AG04450 (cell line): ENCODE measurements at regions of chr12 and their contacts with region 1.

Region 1: DNA sequence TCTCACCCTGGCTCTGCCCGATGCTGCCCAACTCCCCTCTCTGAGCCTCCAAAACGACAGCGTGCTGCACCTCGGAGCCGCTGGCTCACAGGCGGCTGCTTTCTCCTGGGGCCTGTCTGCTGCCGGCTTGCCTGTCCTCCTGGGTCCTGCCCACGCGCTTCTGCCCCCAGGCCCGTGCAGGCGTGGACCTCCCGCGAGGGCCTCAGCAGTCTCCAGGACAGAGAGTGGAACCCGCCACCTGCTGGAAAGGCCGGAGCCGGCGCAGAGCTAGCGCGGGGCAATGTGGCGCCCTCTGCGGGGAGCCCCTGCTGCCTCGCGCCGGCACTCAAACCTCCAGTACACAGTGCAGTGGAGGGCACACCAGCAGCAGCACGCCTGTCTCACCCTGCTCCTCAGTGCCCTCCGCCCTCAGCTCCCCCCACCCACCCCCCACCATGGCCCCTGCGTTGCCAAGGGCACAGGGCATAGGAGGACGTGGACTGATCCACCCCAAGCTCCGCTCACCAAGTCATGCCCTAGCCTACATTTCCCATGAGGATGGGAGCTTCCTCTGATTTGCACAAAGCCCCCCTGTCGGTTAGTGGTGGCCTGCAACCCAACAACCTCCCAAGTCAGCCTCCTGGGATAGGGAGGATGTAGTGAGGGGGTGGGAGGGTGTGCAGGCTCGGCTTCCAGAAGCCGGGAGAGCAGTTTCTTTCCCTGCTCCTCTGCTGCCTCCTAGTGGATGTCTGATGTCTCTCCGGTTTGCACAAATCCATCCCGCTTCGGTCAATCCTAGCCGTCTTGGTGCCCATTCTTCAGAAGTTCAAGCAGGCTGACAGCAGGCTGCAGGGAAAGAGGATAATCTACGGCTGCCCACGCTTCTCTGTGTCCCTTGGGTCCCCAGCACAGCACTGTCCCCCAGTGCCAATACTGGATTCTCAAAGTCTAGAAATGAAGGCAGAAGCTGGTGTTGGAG is 25.2 kb downstream of the KRT8 start:
- DNase-seq: no peak
- H3K4me3 ChIP-seq: peak overlapping the region; percentile 35
- H3K27ac ChIP-seq: no peak overlapping the region
- H3K27me3 ChIP-seq: no peaks in the 10 kb centered on the region
- CTCF ChIP-seq: peak; percentile 87

Region 2: DNA sequence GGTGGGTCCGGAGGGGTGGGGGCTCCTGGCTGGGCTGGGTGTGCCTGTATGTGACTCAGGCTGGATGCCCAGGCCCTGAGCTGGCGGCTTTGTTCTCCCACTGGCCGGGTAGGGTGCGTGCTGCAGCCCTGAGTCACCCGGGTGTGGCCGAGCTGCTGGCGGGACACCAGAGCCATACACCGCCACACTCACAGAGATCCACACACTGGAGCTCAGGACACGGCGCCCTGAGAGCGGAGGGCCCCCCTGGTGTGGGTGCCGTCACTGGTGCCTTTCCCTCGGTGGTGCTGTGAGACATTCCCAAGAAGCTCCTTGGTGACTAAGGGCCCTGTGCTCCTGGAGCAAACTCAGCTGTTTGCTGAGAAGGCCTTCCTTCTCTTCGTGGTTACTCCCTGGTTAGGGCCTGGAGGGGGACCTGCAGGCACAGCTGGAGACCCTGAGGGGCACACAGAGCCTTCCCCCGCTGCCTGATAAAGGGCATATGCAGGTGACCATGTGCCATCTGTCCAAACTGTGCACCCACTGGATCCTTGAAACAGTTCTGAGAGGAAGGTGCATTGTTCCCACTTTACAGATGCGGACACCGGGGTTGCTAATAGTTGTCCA is 732.2 kb before region 1 on chr12:
- CTCF ChIA-PET with region 1: interaction called, 29 read pairs
- POLR2A ChIA-PET with region 1: no interaction called
- DNase-seq: peak; percentile 96
- H3K4me3 ChIP-seq: no peak overlapping the region
- H3K27ac ChIP-seq: peak overlapping the region; percentile 98
- H3K27me3 ChIP-seq: no peaks in the 10 kb centered on the region
- CTCF ChIP-seq: no peak

Region 3: DNA sequence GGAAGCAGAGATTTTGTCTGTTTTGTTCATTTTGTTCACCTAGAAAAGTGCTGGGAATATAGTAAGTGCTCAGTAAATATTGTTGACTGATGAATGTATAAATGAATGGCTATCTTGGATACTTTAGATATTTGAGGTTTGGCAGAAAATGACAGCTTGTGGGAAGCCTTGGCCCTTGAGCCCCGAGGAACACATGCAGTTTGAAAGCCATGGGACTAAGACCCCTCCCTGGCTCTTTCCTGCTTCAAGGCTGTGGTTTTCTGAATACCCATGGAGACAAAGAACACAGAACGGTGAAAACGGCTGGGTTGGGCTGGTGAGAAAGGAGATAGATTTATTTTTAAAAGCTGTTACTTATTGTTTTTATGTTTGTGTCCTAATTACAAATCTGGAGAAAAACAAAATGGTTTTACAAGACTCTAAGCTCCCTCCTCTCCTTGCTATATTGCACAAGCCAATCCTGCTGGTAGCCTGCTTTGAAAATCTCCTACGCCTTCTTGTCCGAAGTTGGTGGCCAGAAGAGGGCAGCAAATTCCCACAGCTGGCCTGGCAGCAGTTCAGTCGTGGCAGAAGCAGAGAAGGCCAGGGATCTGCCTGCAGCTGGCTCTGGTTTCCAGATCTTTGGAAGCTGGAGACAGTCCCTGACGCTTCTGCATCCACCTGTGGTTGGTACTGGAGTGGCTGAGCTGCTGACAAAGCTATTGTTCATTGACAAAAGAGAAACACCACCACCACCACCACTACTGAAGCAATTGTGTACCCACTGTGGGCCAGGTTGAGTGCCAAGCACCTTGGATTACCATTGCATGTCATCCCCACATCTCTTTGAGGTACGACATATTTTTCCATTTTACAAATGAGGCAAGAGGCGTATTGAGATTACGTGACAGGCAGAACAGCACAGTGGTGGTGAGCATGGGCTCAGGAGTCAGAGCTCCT is 507.2 kb before region 1 on chr12:
- CTCF ChIA-PET with region 1: interaction called, 134 read pairs
- POLR2A ChIA-PET with region 1: no interaction called
- DNase-seq: peak; percentile 72
- H3K4me3 ChIP-seq: no peak overlapping the region
- H3K27ac ChIP-seq: no peak overlapping the region
- H3K27me3 ChIP-seq: peaks cover 35% of the 10 kb centered on the region
- CTCF ChIP-seq: peak; percentile 89

Region 4: DNA sequence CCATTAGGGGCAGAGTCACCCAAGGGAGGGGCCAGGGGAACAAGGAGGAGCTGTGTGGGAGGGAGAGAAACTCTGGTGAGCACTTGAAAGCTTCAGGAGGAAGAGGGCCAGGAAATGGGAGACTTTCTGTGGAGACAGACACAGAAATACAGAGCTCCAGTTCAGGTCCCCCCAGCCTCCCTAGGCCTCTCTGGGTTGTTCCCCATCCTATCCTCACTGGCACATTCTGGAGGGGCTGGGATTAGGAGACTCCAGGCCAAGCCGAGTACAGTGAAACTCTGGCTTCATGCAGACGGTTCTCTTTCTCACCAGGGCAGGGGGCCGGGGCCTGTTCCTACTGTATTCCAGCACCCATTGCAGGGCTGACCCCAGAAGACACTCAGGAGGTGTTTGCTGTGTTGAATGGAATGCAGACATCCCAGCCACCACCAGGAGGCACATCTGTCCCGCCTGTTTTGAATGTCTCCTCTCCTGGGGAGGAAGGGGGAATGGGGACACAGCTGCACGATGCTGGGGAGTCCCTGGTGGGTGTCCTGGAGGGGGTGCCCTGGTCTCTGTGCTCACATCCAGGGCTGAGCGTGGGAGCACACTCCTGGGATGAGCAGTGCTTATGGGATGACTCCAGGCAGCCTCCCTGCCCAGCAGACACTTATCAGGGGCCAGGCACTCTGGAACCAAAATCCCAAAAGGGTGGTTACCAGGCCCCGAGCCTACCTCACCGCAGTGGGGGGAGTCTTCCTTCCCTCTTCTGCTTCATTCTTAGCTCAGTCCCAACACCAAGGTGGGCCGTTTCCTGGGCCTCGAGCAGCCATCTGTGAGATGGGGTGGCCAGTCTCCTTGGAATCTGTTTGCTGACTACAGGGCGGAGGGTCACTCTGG is 488.7 kb before region 1 on chr12:
- CTCF ChIA-PET with region 1: interaction called, 13 read pairs
- POLR2A ChIA-PET with region 1: no interaction called
- DNase-seq: no peak
- H3K4me3 ChIP-seq: no peak overlapping the region
- H3K27ac ChIP-seq: no peak overlapping the region
- H3K27me3 ChIP-seq: peaks cover 36% of the 10 kb centered on the region
- CTCF ChIP-seq: peak; percentile 63

Region 5: GRCh38 chr12:52691076-52691840 is 188.4 kb before region 1 on chr12:
- CTCF ChIA-PET with region 1: no interaction called
- POLR2A ChIA-PET with region 1: no interaction called
- DNase-seq: no peak
- H3K4me3 ChIP-seq: no peak overlapping the region
- H3K27ac ChIP-seq: no peak overlapping the region
- H3K27me3 ChIP-seq: peaks cover 39% of the 10 kb centered on the region
- CTCF ChIP-seq: no peak

Region 6: GRCh38 chr12:52807544-52808470 is 71.9 kb before region 1 on chr12:
- CTCF ChIA-PET with region 1: no interaction called
- POLR2A ChIA-PET with region 1: no interaction called
- DNase-seq: no peak
- H3K4me3 ChIP-seq: no peak overlapping the region
- H3K27ac ChIP-seq: no peak overlapping the region
- H3K27me3 ChIP-seq: peaks cover 12% of the 10 kb centered on the region
- CTCF ChIP-seq: no peak

Region 7: GRCh38 chr12:52865090-52865944 is 14.4 kb before region 1 on chr12:
- CTCF ChIA-PET with region 1: interaction called, 27 read pairs
- POLR2A ChIA-PET with region 1: no interaction called
- DNase-seq: peak; percentile 47
- H3K4me3 ChIP-seq: no peak overlapping the region
- H3K27ac ChIP-seq: no peak overlapping the region
- H3K27me3 ChIP-seq: peaks cover 3% of the 10 kb centered on the region
- CTCF ChIP-seq: peak; percentile 89

Region 8: DNA sequence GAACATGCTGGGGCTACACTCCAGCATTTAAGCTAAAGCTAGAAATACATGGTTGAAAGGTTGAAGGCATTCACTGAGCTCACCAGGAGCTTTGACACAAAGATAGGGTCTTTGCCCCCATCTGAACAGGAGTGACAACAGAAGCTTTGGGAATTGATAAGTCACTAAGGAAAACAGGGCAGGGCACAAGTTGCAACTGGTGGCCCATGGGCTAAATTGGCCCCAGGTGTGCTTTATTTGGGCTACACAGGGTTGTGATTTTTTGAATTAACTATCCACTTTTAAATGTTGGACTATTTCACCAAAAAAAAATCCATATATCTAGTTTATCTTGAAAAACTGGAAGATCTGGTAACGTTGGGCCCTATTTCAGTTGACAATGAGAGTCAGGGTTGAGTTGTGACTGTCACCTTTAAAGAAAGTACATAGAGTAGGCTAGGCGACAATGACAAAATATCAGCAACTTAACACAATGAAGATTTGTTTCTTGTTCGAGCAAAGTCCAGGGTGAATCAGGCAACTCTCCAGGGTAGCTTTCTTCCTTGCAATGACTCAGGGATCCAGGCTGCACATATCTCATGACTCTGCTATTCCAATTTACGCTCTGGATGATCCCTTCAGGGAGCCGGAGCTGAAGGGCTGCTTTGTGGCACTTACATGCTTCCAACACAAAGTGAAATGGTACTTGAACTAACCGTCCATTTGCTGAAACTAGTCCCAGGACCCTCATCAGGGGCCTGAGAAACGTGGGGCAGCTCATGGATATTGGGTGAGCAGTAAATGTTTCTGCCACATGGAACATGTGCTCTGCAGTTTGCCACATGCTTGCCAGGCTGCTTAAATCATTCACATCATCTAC is 113.3 kb after region 1 on chr12:
- CTCF ChIA-PET with region 1: interaction called, 1,204 read pairs
- POLR2A ChIA-PET with region 1: no interaction called
- DNase-seq: no peak
- H3K4me3 ChIP-seq: no peak overlapping the region
- H3K27ac ChIP-seq: no peak overlapping the region
- H3K27me3 ChIP-seq: no peaks in the 10 kb centered on the region
- CTCF ChIP-seq: no peak